IMR-90 (cell line): ENCODE measurements at regions of chr7 and their contacts with region 1.

Region 1: GRCh38 chr7:149090397-149091195 is at the start of gene ZNF786:
- DNase-seq: peak; percentile 87
- ATAC-seq: peak; percentile 96
- H3K4me3 ChIP-seq: peak within 1 kb of the TSS; percentile 89
- H3K27ac ChIP-seq: peak within 1 kb of the TSS; percentile 68
- H3K4me1 ChIP-seq: no peaks in the 10 kb centered on the region
- H3K27me3 ChIP-seq: no peaks in the 10 kb centered on the region
- CTCF ChIP-seq: peak; percentile 97
- POLR2A ChIP-seq: peak; percentile 50; the same call in 1 of the 2 replicates
- RAD21 ChIP-seq: peak; percentile 82
- total RNA-seq, gene ZNF786: 5.8 and 7.3 TPM in 2 replicates

Region 2: DNA sequence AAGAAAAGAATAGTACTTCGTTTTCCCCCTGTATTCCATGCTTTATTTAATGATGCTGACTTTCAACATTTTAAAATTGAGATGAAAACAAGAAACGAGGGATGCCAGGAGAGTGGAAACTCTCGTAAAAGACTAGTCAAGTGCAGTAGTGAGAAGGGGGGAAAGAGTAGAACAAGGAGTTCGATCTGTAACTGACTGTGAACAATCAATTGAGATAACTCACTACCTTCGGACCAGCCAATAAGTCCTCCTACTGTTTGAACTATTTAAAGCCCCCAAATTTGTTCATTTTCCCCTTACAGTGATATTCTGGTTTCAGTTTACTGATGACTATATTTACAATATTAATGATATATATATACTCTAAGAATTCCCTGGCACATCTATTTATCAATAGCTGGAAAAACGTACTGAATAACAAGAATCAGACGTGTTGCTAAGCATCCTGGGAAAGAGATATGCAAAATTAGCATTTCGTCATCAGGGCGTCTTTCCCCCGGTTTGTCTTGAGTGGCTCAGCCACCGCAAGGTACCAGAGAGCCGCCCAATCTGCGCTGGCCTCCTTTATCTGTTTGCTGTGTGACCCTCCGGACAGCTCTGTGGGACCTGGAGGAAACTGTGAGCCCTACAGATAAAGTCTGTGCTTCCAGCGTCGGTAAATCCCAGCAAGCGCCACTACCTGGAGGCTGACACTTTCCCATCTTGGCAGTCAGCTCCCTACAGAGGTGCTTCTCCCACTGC is 103.4 kb before region 1 on chr7:
- CTCF ChIA-PET with region 1: no interaction called
- POLR2A ChIA-PET with region 1: interaction called, 13 read pairs
- dilution Hi-C with region 1: no loop called
- in situ Hi-C with region 1: no loop called
- intact Hi-C with region 1: loop called (anchors 2 kb)
- DNase-seq: peak; percentile 91
- ATAC-seq: peak; percentile 87
- H3K4me3 ChIP-seq: peak overlapping the region; percentile 74
- H3K27ac ChIP-seq: peak overlapping the region; percentile 11
- H3K4me1 ChIP-seq: peaks cover 1% of the 10 kb centered on the region; the same call in 1 of the 2 replicates
- H3K27me3 ChIP-seq: no peaks in the 10 kb centered on the region
- CTCF ChIP-seq: no peak
- POLR2A ChIP-seq: no peak
- RAD21 ChIP-seq: no peak

Region 3: GRCh38 chr7:149005241-149006050 is 85.2 kb before region 1 on chr7:
- CTCF ChIA-PET with region 1: no interaction called
- POLR2A ChIA-PET with region 1: no interaction called
- dilution Hi-C with region 1: no loop called
- in situ Hi-C with region 1: no loop called
- intact Hi-C with region 1: loop called (anchors 1 kb)
- DNase-seq: peak; percentile 55
- ATAC-seq: peak; percentile 91
- H3K4me3 ChIP-seq: no peak overlapping the region
- H3K27ac ChIP-seq: no peak overlapping the region
- H3K4me1 ChIP-seq: no peaks in the 10 kb centered on the region
- H3K27me3 ChIP-seq: no peaks in the 10 kb centered on the region
- CTCF ChIP-seq: peak; percentile 67
- POLR2A ChIP-seq: no peak
- RAD21 ChIP-seq: peak; percentile 60

Region 4: GRCh38 chr7:149028346-149029109 is 62.1 kb before region 1 on chr7 and contains the start of gene PDIA4:
- CTCF ChIA-PET with region 1: no interaction called
- POLR2A ChIA-PET with region 1: no interaction called
- dilution Hi-C with region 1: no loop called
- in situ Hi-C with region 1: no loop called
- intact Hi-C with region 1: loop called (anchors 1 kb)
- DNase-seq: peak; percentile 99
- ATAC-seq: peak; percentile 95
- H3K4me3 ChIP-seq: peak within 1 kb of the TSS; percentile 84
- H3K27ac ChIP-seq: peak within 1 kb of the TSS; percentile 63
- H3K4me1 ChIP-seq: no peaks in the 10 kb centered on the region
- H3K27me3 ChIP-seq: no peaks in the 10 kb centered on the region
- CTCF ChIP-seq: peak; percentile 34; the same call in 1 of the 2 replicates
- POLR2A ChIP-seq: peak; percentile 59
- RAD21 ChIP-seq: peak; percentile 9; the same call in 1 of the 2 replicates
- total RNA-seq, gene PDIA4: 277 and 304 TPM in 2 replicates

Region 5: GRCh38 chr7:149125863-149126661 is 35.5 kb after region 1 on chr7 and contains the start of gene ZNF425:
- CTCF ChIA-PET with region 1: no interaction called
- POLR2A ChIA-PET with region 1: no interaction called
- dilution Hi-C with region 1: no loop called
- in situ Hi-C with region 1: no loop called
- intact Hi-C with region 1: loop called (anchors 2 kb)
- DNase-seq: peak; percentile 86
- ATAC-seq: peak; percentile 93
- H3K4me3 ChIP-seq: peak within 1 kb of the TSS; percentile 84
- H3K27ac ChIP-seq: peak within 1 kb of the TSS; percentile 84
- H3K4me1 ChIP-seq: peaks cover 3% of the 10 kb centered on the region
- H3K27me3 ChIP-seq: no peaks in the 10 kb centered on the region
- CTCF ChIP-seq: peak; percentile 97
- POLR2A ChIP-seq: peak; percentile 97
- RAD21 ChIP-seq: peak; percentile 22; the same call in 1 of the 2 replicates
- total RNA-seq, gene ZNF425: 2.3 and 2.8 TPM in 2 replicates

Region 6: DNA sequence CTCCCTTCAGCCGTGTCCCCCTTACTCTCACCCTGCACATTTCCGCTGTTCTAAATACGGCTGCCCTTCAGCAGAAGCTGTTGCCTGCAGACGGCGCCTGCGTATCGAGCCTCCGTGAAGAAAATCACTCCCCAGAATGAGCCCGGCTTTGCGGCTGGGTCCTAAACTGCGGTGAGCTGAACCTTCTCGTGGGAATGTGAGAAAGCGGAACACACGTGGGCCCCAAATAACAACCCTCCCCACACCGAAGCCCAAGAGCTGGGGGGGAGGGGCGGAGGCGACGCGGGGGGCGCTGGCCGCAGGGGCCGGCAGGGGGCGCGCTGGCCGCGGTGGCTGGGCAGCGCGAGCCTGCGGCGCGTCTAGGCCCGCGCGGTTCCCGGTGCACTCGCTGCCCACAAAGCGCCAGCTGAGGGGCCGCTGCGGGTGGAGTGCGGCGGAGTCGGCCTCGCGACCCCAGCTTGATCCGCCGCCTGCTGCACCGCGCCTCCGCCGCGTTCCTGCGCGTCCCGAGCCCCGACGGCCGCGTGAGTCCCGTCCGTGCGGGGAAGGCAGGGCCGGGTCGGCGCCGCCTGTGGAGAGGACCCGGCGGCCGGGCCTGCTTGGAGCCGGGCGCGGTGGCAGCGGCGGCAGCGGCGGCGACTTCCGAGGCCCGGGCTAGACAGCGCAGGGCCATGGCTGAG is 56.6 kb after region 1 on chr7 and contains the start of gene ZNF398:
- CTCF ChIA-PET with region 1: no interaction called
- POLR2A ChIA-PET with region 1: no interaction called
- dilution Hi-C with region 1: no loop called
- in situ Hi-C with region 1: no loop called
- intact Hi-C with region 1: no loop called
- DNase-seq: peak; percentile 77
- ATAC-seq: peak; percentile 91
- H3K4me3 ChIP-seq: peak within 1 kb of the TSS; percentile 67
- H3K27ac ChIP-seq: peak within 1 kb of the TSS; percentile 97
- H3K4me1 ChIP-seq: 0 out of 2 replicates have a peak, but pooled peaks cover 2% of the 10 kb centered on the region
- H3K27me3 ChIP-seq: no peaks in the 10 kb centered on the region
- CTCF ChIP-seq: peak; percentile 81
- POLR2A ChIP-seq: peak; percentile 65
- RAD21 ChIP-seq: no peak; the same call in 1 of the 2 replicates
- total RNA-seq, gene ZNF398: 7.9 and 9.2 TPM in 2 replicates